ENCODE measurements at regions of chr2 and their contacts with region 1.

Region 1: DNA sequence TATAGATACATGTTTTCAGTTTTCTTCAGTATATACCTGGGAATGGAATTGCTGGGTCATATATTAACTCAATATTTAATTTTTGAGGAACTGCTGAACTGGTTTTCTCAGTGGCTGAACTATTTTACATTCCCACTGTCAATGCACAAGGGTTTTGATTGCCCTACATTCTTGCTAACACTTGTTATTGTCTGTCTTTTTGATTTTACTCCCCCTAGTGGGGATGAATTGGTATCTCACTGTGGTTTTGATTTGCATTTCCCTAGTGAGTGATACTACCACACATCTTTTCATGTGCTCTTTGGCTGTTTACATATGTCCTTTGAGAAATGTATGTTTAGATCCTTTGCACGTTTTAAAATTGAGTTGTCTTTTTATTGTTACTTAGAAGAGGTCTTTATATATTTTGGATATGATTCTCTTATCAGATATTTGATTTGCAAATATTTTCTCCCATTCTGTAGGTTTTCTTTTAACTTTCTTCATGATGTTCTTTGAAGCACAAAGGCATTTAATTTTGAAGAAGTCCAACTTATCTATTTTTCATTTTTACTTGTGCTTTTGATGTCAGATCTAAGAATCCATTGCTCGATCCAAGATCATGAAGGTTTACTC is 36.2 kb downstream of the ASB1 start:
- DNase-seq: no peak
- H3K4me3 Mint-ChIP-seq: no peak overlapping the region
- H3K27ac Mint-ChIP-seq: no peak overlapping the region
- H3K4me1 Mint-ChIP-seq: peaks cover 2% of the 10 kb centered on the region
- H3K27me3 Mint-ChIP-seq: no peaks in the 10 kb centered on the region

Region 2: DNA sequence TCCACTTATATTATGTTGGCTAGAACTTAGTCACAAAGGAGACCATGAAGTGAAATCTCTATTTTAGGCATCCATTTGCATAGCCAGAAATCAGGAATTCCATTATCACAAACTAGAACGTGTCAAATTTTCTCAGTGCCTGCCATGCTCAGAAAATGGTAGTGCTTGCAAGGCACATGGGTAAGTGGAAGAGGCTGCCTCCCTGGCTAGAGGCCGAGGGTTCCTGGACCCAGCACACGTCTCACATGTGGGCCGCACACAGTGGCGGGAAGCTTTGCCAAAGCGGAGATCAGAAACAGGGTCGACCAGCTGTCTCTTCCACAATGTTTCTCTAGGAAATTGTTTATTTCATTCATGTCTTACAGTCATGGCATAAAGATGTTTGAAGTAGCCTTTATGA is 100.3 kb before region 1 on chr2:
- intact Hi-C with region 1: loop called (anchors 2 kb)
- DNase-seq: no peak
- H3K4me3 Mint-ChIP-seq: no peak overlapping the region
- H3K27ac Mint-ChIP-seq: no peak overlapping the region
- H3K4me1 Mint-ChIP-seq: peaks cover 17% of the 10 kb centered on the region
- H3K27me3 Mint-ChIP-seq: no peaks in the 10 kb centered on the region

Region 3: GRCh38 chr2:238370823-238371372 is 92.0 kb before region 1 on chr2:
- intact Hi-C with region 1: loop called (anchors 1 kb)
- DNase-seq: peak; percentile 30
- H3K4me3 Mint-ChIP-seq: no peak overlapping the region
- H3K27ac Mint-ChIP-seq: no peak overlapping the region
- H3K4me1 Mint-ChIP-seq: peaks cover 3% of the 10 kb centered on the region
- H3K27me3 Mint-ChIP-seq: peaks cover 3% of the 10 kb centered on the region

Region 4: DNA sequence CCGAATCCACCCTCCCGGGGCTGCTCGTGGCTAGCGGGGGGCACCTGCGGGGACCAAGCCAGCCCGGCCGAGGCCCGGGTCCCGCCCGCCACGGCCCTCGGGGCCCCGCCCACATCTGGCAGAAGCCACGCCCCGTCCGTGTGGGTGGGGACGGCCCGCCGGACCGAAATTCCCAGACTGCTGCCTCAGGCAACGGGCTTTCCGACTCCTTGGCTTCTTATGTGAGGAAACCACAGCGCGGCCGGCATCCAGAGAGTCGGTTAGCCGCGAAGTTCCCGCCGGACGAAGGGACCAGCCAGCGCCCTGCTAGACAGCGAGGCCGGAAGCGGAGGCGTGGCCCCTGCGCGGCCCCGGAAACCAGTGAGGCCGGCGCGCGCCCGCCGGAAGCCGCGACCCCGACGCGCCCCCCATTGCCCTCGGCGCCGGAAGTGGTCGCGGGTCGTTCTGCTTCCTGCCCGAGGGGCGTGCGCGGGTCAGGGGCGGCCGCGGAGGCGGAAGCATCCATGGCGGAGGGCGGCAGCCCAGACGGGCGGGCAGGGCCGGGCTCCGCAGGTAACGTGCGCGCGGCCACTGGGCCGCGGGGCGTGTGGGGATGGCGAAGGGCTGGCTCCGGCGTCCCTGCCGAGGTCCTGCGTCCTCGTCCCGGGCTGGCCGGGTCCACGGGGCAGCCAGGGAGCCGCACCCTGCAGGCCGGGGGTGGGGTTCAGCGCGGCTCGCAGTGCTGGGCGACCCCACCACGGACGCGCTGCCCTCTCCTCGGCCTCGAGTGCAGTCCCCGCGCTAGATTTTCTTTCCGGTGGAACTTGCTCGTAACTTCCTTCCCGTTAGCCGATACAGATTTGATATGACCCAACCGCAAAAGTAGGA is 36.1 kb before region 1 on chr2 and contains the start of gene ASB1:
- intact Hi-C with region 1: no loop called
- DNase-seq: peak; percentile 78
- H3K4me3 Mint-ChIP-seq: peak within 1 kb of the TSS; percentile 89
- H3K27ac Mint-ChIP-seq: peak within 1 kb of the TSS; percentile 91
- H3K4me1 Mint-ChIP-seq: peaks cover 25% of the 10 kb centered on the region
- H3K27me3 Mint-ChIP-seq: no peaks in the 10 kb centered on the region
- total RNA-seq, gene ASB1: 36.3 and 37.4 TPM in 2 replicates

Region 5: DNA sequence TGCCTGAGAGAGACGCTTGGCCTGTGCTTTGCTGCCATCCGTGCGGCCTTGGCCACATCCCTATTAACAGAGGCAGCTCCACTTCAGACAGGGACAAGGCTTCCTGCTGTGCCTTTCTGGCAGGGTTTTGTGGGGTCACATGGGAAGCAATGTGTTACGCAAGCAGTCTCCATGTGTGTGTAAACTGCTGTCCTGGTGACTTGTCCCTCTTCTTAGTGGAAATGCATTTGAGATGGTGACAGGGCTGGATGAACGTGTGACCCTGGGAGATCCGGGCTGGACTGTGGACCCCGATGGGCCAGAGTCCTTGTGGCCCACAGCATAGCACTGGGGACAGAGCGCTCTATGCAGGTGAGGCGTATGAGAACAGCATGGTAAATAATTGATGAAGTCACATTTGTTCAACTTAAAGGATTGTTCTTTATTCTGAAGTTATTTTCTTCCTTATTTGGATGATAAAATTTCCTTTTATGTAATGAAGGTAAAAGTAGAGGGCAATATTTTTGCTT is 12.9 kb before region 1 on chr2:
- intact Hi-C with region 1: no loop called
- DNase-seq: no peak
- H3K4me3 Mint-ChIP-seq: no peak overlapping the region
- H3K27ac Mint-ChIP-seq: no peak overlapping the region
- H3K4me1 Mint-ChIP-seq: no peaks in the 10 kb centered on the region
- H3K27me3 Mint-ChIP-seq: no peaks in the 10 kb centered on the region

Region 6: GRCh38 chr2:238615187-238615586 is 152.3 kb after region 1 on chr2:
- intact Hi-C with region 1: no loop called
- DNase-seq: no peak
- H3K4me3 Mint-ChIP-seq: no peak overlapping the region
- H3K27ac Mint-ChIP-seq: no peak overlapping the region
- H3K4me1 Mint-ChIP-seq: no peaks in the 10 kb centered on the region
- H3K27me3 Mint-ChIP-seq: peaks cover 4% of the 10 kb centered on the region